ENCODE measurements at regions of chr10 and their contacts with region 1.

Region 1: GRCh38 chr10:91579329-91579985 is 53.4 kb downstream of the PPP1R3C start:
- DNase-seq: peak; percentile 63
- ATAC-seq: peak; percentile 70
- H3K4me3 ChIP-seq: no peak overlapping the region
- H3K27ac ChIP-seq: peak overlapping the region; percentile 56; the same call in 1 of the 2 replicates
- H3K4me1 ChIP-seq: peaks cover 6% of the 10 kb centered on the region
- H3K27me3 ChIP-seq: no peaks in the 10 kb centered on the region
- CTCF ChIP-seq: no peak
- POLR2A ChIP-seq: no peak
- RAD21 ChIP-seq: no peak

Region 2: DNA sequence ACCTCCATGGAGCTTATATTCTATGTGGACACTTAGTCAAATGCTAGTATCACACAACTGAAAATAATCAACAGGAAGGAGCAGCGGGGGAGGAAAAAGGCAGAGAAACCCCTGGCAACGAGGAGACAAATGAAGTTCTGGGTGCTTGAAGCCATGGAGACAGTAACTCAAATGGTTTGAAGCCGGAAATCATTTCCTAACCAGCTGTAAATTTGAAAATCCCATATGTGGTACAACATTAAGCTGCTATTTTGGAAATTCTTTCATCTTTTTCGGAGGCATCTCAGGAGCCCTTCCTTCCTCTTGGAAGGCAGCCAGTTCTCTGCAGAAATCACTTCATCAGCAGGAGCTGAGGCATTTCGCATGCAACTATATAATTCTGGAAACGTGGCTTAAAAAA is 38.0 kb before region 1 on chr10:
- CTCF ChIA-PET with region 1: no interaction called
- POLR2A ChIA-PET with region 1: no interaction called
- dilution Hi-C with region 1: no loop called
- in situ Hi-C with region 1: no loop called
- intact Hi-C with region 1: loop called (anchors 2 kb)
- DNase-seq: no peak
- ATAC-seq: no peak; the same call in 1 of the 2 replicates
- H3K4me3 ChIP-seq: no peak overlapping the region
- H3K27ac ChIP-seq: no peak overlapping the region
- H3K4me1 ChIP-seq: peaks cover 2% of the 10 kb centered on the region; the same call in 1 of the 2 replicates
- H3K27me3 ChIP-seq: no peaks in the 10 kb centered on the region
- CTCF ChIP-seq: no peak
- POLR2A ChIP-seq: no peak
- RAD21 ChIP-seq: no peak

Region 3: GRCh38 chr10:91983416-91983815 is 404.0 kb after region 1 on chr10:
- CTCF ChIA-PET with region 1: no interaction called
- POLR2A ChIA-PET with region 1: no interaction called
- dilution Hi-C with region 1: no loop called
- in situ Hi-C with region 1: no loop called
- intact Hi-C with region 1: no loop called
- DNase-seq: no peak
- ATAC-seq: no peak
- H3K4me3 ChIP-seq: no peak overlapping the region
- H3K27ac ChIP-seq: no peak overlapping the region
- H3K4me1 ChIP-seq: no peaks in the 10 kb centered on the region
- H3K27me3 ChIP-seq: no peaks in the 10 kb centered on the region
- CTCF ChIP-seq: no peak
- POLR2A ChIP-seq: no peak
- RAD21 ChIP-seq: no peak

Measured in IMR-90 (cell line).